Dorsolateral prefrontal cortex (tissue), 120 donors: ENCODE measurements at regions of chr9 and their contacts with region 1.

Region 1: GRCh38 chr9:12972608-12973589 is 198.1 kb downstream of the LURAP1L start:
- DNase-seq: peak in 9 of 10 donors; percentile 10 to 84 (median 54)
- H3K4me3 ChIP-seq: peak overlapping the region in 8 of 59 donors; percentile 2 to 14 (median 5)
- H3K27ac ChIP-seq: peak overlapping the region in 16 of 59 donors; percentile 4 to 67 (median 48)
- H3K27me3 ChIP-seq: no peaks in the 10 kb centered on the region
- CTCF ChIP-seq: peak in 24 of 56 donors; percentile 8 to 47 (median 26)

Region 2: GRCh38 chr9:12723409-12724028 is 249.4 kb before region 1 on chr9:
- intact Hi-C with region 1: loop called in 1 of 2 experiments (anchors 10 kb)
- DNase-seq: no peak
- H3K4me3 ChIP-seq: no peak overlapping the region
- H3K27ac ChIP-seq: peak overlapping the region in 2 of 59 donors; percentile 43 to 46
- H3K27me3 ChIP-seq: no peaks in the 10 kb centered on the region
- CTCF ChIP-seq: peak; percentile 46 to 82 (median 68)

Region 3: GRCh38 chr9:12884737-12885414 is 88.0 kb before region 1 on chr9:
- intact Hi-C with region 1: loop called in 1 of 2 experiments (anchors 5 kb)
- DNase-seq: peak in 1 of 10 donors; percentile 16
- H3K4me3 ChIP-seq: no peak overlapping the region
- H3K27ac ChIP-seq: no peak overlapping the region
- H3K27me3 ChIP-seq: no peaks in the 10 kb centered on the region
- CTCF ChIP-seq: peak in 55 of 56 donors; percentile 39 to 84 (median 62)

Region 4: DNA sequence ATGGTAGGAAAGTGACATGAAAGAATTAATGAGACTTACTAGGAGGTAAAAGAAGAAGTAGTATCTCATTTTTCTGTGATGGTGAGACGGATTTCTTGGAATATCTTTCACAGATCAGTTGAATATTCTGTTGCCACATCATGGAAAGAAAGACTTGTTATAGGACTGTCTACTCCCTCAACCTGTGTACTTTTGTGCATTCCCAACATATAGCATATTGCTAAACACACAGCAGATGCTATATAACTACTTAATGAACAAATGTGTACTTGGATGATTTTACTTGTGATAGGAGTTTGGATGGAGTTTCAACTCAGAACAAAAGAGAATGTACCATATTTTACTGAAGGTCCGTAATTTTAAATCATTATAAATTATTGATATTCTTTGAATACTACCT is 69.6 kb before region 1 on chr9:
- intact Hi-C with region 1: no loop called
- DNase-seq: no peak
- H3K4me3 ChIP-seq: no peak overlapping the region
- H3K27ac ChIP-seq: no peak overlapping the region
- H3K27me3 ChIP-seq: no peaks in the 10 kb centered on the region
- CTCF ChIP-seq: no peak

Region 5: GRCh38 chr9:12916042-12916441 is 56.9 kb before region 1 on chr9:
- intact Hi-C with region 1: loop called in 1 of 2 experiments (anchors 5 kb)
- DNase-seq: peak in 3 of 10 donors; percentile 22 to 52 (median 40)
- H3K4me3 ChIP-seq: no peak overlapping the region
- H3K27ac ChIP-seq: peak overlapping the region in 1 of 59 donors; percentile 14
- H3K27me3 ChIP-seq: no peaks in the 10 kb centered on the region
- CTCF ChIP-seq: peak in 11 of 56 donors; percentile 10 to 41 (median 25)